CD4-positive, alpha-beta T cell (primary cell): ENCODE measurements at regions of chr5 and their contacts with region 1.

Region 1: DNA sequence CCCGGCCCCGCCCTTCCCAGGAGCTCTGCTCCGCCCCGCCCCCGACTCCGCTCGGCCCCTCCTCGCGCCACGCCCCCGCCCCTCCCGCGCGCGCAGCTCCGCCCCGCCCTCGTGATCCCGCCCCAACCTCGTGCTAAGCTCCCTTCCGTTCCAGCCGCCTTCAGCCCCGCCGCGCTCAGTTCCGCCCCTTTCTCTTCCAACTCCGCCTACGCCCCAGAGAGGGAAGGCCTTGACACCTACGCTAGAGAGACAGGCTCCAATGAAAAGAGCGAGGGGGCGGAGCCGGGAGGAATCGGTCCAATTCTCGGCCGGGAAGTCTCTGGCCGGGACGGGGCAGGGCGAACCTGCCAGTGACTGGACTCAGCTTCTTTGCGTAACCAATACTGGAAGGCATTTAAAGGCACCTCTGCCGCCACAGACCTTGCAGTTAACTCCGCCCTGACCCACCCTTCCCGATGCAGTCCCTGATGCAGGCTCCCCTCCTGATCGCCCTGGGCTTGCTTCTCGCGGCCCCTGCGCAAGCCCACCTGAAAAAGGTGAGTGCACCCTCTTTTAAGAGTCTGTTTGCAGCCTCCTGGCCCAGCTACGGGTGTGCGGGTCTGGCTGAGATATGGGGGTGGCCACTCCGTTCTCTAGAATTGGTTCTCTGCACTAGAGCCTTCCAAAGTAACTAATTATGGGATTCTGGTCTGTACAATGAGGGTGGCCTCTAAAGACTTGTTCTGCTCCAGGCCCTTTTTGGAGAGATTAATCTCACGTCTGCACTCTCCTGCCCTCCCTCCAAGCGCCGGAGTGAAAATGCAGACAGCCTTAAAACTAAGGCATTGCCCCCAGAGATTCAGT is at the start of gene GM2A:
- DNase-seq: peak; percentile 95 to 99 (median 97)
- ATAC-seq: peak; percentile 98
- H3K4me3 ChIP-seq: peak within 1 kb of the TSS; percentile 87
- H3K4me3 Mint-ChIP-seq: peak within 1 kb of the TSS; percentile 88
- H3K27ac ChIP-seq: peak within 1 kb of the TSS; percentile 51 to 68
- H3K27ac Mint-ChIP-seq: peak within 1 kb of the TSS; percentile 92
- H3K4me1 ChIP-seq: peaks cover 42% of the 10 kb centered on the region
- H3K4me1 Mint-ChIP-seq: peaks cover 61% of the 10 kb centered on the region
- H3K27me3 ChIP-seq: no peaks in the 10 kb centered on the region
- H3K27me3 Mint-ChIP-seq: no peaks in the 10 kb centered on the region
- CTCF ChIP-seq: no peak
- total RNA-seq, gene GM2A: 3.1 to 4.1 TPM

Region 2: GRCh38 chr5:150449517-150450339 is 803.3 kb before region 1 on chr5 and contains the start of gene RPS14:
- CTCF ChIA-PET with region 1: no interaction called
- POLR2A ChIA-PET with region 1: interaction called, 8 read pairs
- intact Hi-C with region 1: loop called in 1 of 2 experiments (anchors 5 kb)
- DNase-seq: peak; percentile 89 to 97 (median 94)
- ATAC-seq: peak; percentile 88
- H3K4me3 ChIP-seq: peak within 1 kb of the TSS; percentile 86
- H3K4me3 Mint-ChIP-seq: peak within 1 kb of the TSS; percentile 96
- H3K27ac ChIP-seq: peak within 1 kb of the TSS; percentile 94 to 98
- H3K27ac Mint-ChIP-seq: peak within 1 kb of the TSS; percentile 98
- H3K4me1 ChIP-seq: peaks cover 36% of the 10 kb centered on the region
- H3K4me1 Mint-ChIP-seq: peaks cover 39% of the 10 kb centered on the region
- H3K27me3 ChIP-seq: no peaks in the 10 kb centered on the region
- H3K27me3 Mint-ChIP-seq: no peaks in the 10 kb centered on the region
- CTCF ChIP-seq: peak; percentile 94
- total RNA-seq, gene RPS14: 5,224 to 5,317 TPM

Region 3: DNA sequence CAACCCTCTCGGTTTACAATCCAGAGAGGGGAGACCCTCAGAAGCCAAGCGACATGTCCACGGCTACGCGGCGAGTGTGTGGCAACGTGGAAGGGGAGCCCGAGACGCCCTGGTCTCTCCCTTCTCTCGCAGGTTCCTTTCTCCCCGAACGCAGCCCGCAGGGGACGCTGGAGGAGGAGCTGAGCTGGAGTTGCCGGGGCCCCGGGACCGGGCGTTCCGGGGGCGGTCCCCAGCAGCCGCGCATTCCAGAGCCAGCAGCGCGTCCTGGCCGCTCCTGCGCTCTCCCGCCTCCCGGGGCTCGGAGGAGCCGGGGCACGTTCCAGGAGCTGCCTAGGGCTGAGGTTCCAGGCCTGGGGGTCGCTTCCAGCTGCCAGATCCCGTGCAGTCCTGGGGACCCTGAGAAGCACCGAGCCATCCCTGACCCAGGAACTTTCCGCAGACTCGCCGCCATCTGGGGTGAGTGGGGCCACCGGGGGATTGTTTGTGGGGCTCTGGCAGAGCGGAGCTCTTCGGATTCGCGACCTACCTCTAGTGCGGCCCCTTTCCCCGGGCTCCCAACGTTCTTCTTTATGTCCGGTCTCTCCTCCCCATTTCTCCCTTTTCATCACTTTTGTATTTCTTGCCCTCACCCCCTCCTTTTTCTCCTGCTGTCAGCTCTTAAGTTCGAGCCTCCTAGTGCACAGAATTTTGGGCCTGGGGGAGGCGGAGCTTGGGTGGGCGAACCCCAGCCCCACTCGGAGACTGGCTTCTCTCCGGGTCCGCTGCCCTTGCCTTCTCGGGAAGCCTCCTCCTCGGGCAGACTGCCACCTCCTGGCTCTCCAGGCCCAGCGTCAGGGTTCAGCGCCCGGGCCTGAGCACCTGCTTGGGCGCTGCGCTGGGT is 474.2 kb before region 1 on chr5 and contains the start of gene SMIM3:
- CTCF ChIA-PET with region 1: no interaction called
- POLR2A ChIA-PET with region 1: interaction called, 5 read pairs
- intact Hi-C with region 1: loop called in 1 of 2 experiments (anchors 10 kb)
- DNase-seq: peak; percentile 53 to 84 (median 68)
- ATAC-seq: peak; percentile 63
- H3K4me3 ChIP-seq: peak within 1 kb of the TSS; percentile 96
- H3K4me3 Mint-ChIP-seq: peak within 1 kb of the TSS; percentile 99
- H3K27ac ChIP-seq: peak within 1 kb of the TSS; percentile 62 to 70
- H3K27ac Mint-ChIP-seq: peak within 1 kb of the TSS; percentile 90
- H3K4me1 ChIP-seq: peaks cover 56% of the 10 kb centered on the region
- H3K4me1 Mint-ChIP-seq: peaks cover 58% of the 10 kb centered on the region
- H3K27me3 ChIP-seq: no peaks in the 10 kb centered on the region
- H3K27me3 Mint-ChIP-seq: no peaks in the 10 kb centered on the region
- CTCF ChIP-seq: peak; percentile 41
- total RNA-seq, gene SMIM3: 2.9 TPM

Region 4: GRCh38 chr5:151126199-151126645 is 126.8 kb before region 1 on chr5:
- CTCF ChIA-PET with region 1: interaction called, 12 read pairs
- POLR2A ChIA-PET with region 1: interaction called, 7 read pairs
- intact Hi-C with region 1: no loop called
- DNase-seq: peak; percentile 42 to 84 (median 62)
- ATAC-seq: peak; percentile 61
- H3K4me3 ChIP-seq: no peak overlapping the region
- H3K4me3 Mint-ChIP-seq: no peak overlapping the region
- H3K27ac ChIP-seq: peak overlapping the region in 1 of 2 donors; percentile 50
- H3K27ac Mint-ChIP-seq: peak overlapping the region; percentile 91
- H3K4me1 ChIP-seq: peaks cover 53% of the 10 kb centered on the region
- H3K4me1 Mint-ChIP-seq: peaks cover 71% of the 10 kb centered on the region
- H3K27me3 ChIP-seq: no peaks in the 10 kb centered on the region
- H3K27me3 Mint-ChIP-seq: no peaks in the 10 kb centered on the region
- CTCF ChIP-seq: peak; percentile 90

Region 5: GRCh38 chr5:151202381-151203139 is 50.4 kb before region 1 on chr5:
- CTCF ChIA-PET with region 1: no interaction called
- POLR2A ChIA-PET with region 1: interaction called, 10 read pairs
- intact Hi-C with region 1: no loop called
- DNase-seq: peak in 6 of 14 experiments; percentile 4 to 76 (median 58)
- ATAC-seq: peak; percentile 74
- H3K4me3 ChIP-seq: no peak overlapping the region
- H3K4me3 Mint-ChIP-seq: peak overlapping the region; percentile 68
- H3K27ac ChIP-seq: peak overlapping the region; percentile 38 to 49
- H3K27ac Mint-ChIP-seq: peak overlapping the region; percentile 90
- H3K4me1 ChIP-seq: peaks cover 41% of the 10 kb centered on the region
- H3K4me1 Mint-ChIP-seq: peaks cover 56% of the 10 kb centered on the region
- H3K27me3 ChIP-seq: no peaks in the 10 kb centered on the region
- H3K27me3 Mint-ChIP-seq: no peaks in the 10 kb centered on the region
- CTCF ChIP-seq: no peak

Region 6: DNA sequence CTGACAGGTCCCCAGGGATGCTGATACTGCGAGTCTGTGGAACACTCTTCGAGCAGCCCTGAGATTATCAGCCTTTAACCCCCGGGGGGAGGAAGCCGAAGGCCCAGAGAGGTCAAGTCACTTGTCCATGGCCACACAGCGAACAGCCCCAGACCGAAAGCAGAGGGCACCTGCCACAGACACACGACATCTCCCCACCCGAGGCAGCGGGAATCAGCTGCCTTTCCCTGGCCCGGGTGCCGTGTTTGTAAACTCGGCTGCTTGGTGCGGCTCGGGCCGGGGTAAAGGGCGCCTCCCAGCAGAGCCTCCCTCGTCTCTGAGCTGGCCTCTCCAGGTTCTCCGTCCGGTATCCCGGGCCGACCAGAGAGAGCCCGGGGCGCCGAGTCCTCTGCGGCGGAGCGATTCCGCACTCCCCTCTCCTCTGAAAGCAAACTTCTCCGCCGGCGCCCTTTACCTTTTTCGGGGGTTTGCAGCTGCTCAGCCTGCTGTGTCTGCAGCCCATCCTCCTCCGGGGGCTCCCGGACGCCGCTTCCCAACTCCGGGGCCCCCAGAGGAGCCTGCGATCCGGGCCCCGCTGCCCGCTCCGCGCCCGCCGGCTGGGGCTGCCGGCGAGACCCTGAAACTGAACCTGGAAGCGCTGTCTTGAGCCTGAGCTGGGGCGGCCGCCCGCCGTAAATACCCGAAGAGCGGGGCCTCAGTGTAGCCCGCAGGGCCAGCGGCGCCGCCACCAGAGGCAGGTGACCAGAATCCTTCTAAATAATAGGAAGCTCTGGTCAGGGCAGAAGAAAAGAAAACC is 29.3 kb before region 1 on chr5 and contains the start of gene CCDC69:
- CTCF ChIA-PET with region 1: no interaction called
- POLR2A ChIA-PET with region 1: interaction called, 41 read pairs
- intact Hi-C with region 1: loop called in 1 of 2 experiments (anchors 1 kb)
- DNase-seq: peak in 12 of 14 experiments; percentile 16 to 73 (median 50)
- ATAC-seq: peak; percentile 40
- H3K4me3 ChIP-seq: peak within 1 kb of the TSS; percentile 98
- H3K4me3 Mint-ChIP-seq: peak within 1 kb of the TSS; percentile 92
- H3K27ac ChIP-seq: peak within 1 kb of the TSS; percentile 92 to 94
- H3K27ac Mint-ChIP-seq: peak within 1 kb of the TSS; percentile 94
- H3K4me1 ChIP-seq: peaks cover 64% of the 10 kb centered on the region
- H3K4me1 Mint-ChIP-seq: peaks cover 63% of the 10 kb centered on the region
- H3K27me3 ChIP-seq: no peaks in the 10 kb centered on the region
- H3K27me3 Mint-ChIP-seq: no peaks in the 10 kb centered on the region
- CTCF ChIP-seq: no peak
- total RNA-seq, gene CCDC69: 68.0 to 68.9 TPM

Region 7: DNA sequence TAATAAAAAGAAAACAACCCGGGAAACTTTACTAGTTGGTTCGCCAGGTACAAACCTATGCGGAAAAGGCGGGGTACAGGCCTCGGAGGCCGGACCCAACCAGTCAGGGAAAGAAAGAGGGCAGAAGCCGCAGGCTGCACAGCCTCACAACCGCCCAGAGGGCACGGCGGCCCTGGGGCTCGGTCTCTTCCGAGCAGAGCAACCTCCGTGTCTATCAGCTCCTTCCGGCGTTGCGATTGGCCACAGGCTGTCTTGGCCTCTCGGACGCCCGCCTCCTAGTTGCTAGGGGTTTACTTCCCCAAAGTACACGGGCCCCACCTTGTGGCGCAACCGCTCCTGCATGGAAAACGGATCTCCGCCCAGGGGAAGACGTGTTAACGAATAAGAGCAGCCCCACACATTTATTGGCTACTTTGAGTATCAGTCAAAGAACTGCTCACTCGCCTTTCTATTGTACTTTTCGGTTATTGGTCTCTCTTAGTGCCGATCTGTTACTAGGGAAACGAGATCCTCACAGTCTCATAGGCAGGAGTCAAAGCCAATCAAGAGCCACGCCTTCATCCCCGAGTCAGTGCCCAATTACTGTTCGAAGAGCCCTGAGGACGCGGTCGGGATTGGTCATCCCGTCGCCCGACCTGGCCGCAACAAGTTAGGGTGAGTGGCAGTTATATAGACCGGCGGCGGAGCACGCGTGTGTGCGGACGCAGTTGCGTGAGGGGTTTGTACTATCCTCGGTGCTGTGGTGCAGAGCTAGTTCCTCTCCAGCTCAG is 518.5 kb after region 1 on chr5 and contains the start of gene G3BP1:
- CTCF ChIA-PET with region 1: no interaction called
- POLR2A ChIA-PET with region 1: interaction called, 16 read pairs
- intact Hi-C with region 1: loop called in 1 of 2 experiments (anchors 5 kb)
- DNase-seq: peak; percentile 97 to 100 (median 99)
- ATAC-seq: peak; percentile 76
- H3K4me3 ChIP-seq: peak within 1 kb of the TSS; percentile 88
- H3K4me3 Mint-ChIP-seq: peak within 1 kb of the TSS; percentile 90
- H3K27ac ChIP-seq: peak within 1 kb of the TSS; percentile 86 to 90
- H3K27ac Mint-ChIP-seq: no peak within 1 kb of the TSS
- H3K4me1 ChIP-seq: peaks cover 31% of the 10 kb centered on the region
- H3K4me1 Mint-ChIP-seq: peaks cover 47% of the 10 kb centered on the region
- H3K27me3 ChIP-seq: no peaks in the 10 kb centered on the region
- H3K27me3 Mint-ChIP-seq: no peaks in the 10 kb centered on the region
- CTCF ChIP-seq: peak; percentile 45
- total RNA-seq, gene G3BP1: 82.3 to 83.9 TPM